Activated CD4-positive, alpha-beta T cell treated with anti-CD3 and anti-CD28 coated beads, Interleukin-2, amount 10 ng/mL, durations not matched to agents 24 days and 14 days (primary cell): ENCODE measurements at regions of chr10 and their contacts with region 1.

Region 1: DNA sequence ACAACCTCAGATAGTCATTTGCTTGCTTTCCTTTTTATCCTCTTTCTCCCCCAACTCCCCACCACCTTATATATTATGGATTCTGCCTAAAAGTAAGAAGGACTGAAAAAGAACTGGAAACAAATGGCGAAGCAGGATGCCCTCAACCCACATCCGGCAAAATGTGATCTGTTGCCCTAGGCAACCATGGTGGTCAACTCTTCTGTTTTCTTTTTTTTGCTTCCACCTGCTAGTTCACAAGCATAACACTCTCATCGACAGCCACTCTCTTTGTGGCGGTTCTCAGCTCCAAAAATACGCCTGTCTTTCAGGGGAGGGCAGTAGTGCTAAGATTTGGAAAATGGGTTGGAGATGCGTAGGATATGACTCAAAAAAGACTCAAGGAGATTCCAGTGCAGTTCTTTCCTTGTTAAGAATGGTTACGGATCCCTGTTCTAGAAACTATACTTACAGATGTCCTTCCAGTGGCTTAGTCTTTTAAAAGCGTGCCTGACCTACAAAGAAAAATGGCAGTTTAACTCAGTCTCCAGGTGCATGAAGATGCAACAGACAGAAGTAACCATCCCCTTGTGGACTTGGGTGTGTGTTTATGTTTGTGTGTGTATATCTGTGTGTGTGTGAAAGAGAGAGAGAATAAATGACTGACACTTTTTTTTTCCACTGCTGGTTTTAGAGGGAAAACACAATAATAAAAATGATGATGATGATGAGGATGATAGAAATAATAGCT is 10.7 kb downstream of the APBB1IP start:
- DNase-seq: peak; percentile 95
- H3K4me3 Mint-ChIP-seq: peak overlapping the region; percentile 80
- H3K27ac Mint-ChIP-seq: peak overlapping the region; percentile 97
- H3K4me1 Mint-ChIP-seq: peaks cover 73% of the 10 kb centered on the region
- H3K27me3 Mint-ChIP-seq: no peaks in the 10 kb centered on the region

Region 2: DNA sequence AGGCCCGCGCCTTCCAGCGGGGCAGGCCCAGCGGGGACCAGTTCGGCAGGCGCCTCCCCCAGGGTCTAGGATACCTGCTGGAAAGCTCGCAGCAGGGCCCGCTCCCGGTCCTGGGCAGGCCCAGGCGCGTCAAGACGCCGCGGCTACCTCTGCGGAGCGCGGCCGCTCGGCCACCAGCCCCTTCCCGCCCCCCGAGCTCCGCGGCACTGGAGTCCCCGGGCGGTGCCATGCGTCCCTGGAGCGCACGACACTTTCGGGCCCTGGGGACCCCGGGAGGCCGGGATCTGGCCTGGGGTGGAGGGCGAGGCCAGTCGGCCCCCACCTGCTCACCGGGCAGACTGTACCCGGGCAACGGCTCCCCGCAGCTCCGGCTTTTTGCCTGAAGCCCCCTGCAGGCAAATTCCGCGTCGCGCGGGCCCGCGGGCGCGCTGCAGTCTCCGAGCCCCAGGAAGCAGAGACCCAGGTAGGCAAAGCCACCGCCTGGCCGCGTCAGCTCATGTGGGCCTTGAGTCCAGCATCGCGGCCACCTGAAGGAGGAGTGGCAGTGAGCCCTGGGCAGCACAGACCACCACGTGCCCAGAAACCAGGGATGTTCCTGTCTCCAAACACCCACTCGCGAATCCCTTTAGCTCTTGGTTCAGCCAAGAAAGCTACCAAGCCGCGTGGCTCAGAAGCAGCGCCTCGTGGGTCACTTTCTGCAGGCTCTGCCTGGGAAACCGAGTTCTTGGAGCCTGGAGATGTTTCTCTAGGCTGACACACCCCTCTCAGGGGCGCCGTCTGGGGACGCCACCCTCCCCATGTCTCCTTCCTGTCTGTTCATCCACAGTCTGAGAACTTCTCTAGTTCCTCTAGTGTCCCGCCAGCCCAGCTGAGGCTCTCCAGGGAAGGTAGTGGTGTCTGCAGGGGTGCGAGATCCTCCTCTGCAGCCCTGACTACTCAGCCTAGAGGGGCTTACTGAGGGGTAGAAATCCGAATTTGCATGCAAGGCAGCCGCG is 56.9 kb before region 1 on chr10:
- intact Hi-C with region 1: no loop called
- DNase-seq: no peak
- H3K4me3 Mint-ChIP-seq: no peak overlapping the region
- H3K27ac Mint-ChIP-seq: no peak overlapping the region
- H3K4me1 Mint-ChIP-seq: no peaks in the 10 kb centered on the region
- H3K27me3 Mint-ChIP-seq: peaks cover 21% of the 10 kb centered on the region

Region 3: GRCh38 chr10:26437637-26438461 is 11.0 kb before region 1 on chr10 and contains the start of gene APBB1IP:
- intact Hi-C with region 1: loop called (anchors 1 kb)
- DNase-seq: peak; percentile 87
- H3K4me3 Mint-ChIP-seq: peak within 1 kb of the TSS; percentile 92
- H3K27ac Mint-ChIP-seq: peak within 1 kb of the TSS; percentile 95
- H3K4me1 Mint-ChIP-seq: peaks cover 37% of the 10 kb centered on the region
- H3K27me3 Mint-ChIP-seq: no peaks in the 10 kb centered on the region
- total RNA-seq, gene APBB1IP: 40.0 and 41.3 TPM in 2 replicates

Region 4: GRCh38 chr10:26475386-26475785 is 26.5 kb after region 1 on chr10:
- intact Hi-C with region 1: loop called (anchors 1 kb)
- DNase-seq: peak; percentile 74
- H3K4me3 Mint-ChIP-seq: peak overlapping the region; percentile 65
- H3K27ac Mint-ChIP-seq: peak overlapping the region; percentile 84
- H3K4me1 Mint-ChIP-seq: peaks cover 69% of the 10 kb centered on the region
- H3K27me3 Mint-ChIP-seq: no peaks in the 10 kb centered on the region

Region 5: DNA sequence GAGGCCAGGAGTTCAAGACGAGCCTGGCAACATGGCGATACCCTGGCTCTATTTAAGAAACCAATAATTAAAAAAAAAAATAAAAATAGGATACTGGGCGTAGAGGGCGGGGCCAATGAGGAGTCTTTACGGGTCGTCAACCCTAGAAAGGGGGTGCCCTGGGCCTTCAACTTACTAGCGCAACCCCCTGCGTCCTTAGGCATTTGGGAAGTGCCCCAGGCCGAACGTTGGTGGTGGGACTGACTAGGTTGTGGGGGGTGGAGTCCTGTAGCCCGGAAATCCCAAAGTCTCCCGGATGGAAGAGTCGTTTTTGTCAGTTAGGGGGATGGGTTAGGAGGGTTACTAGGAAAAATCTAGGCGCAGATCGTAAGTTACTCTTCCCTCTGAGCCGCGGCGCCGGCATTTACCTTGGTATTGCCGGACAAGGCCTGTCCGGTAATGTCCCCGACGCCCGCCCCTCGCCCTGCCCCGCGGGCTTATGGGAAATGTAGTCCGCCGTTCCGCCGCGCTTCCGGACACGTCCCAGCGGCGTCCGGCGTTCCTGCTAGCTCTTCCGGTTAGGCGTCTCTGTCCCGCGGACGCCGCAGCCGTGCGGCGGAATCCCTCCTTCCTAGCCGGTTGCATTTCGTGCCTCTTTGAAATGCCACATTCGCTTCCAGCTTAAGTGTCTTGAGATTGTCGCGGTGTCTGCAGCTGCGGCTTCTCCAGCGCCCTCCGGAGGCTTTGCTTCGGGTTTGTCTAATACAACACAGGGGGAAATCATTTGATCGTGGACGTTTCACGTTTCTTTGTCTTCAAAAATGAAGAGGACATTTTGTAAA is 793.0 kb after region 1 on chr10:
- intact Hi-C with region 1: loop called (anchors 5 kb)
- DNase-seq: peak; percentile 97
- H3K4me3 Mint-ChIP-seq: peak overlapping the region; percentile 96
- H3K27ac Mint-ChIP-seq: peak overlapping the region; percentile 99
- H3K4me1 Mint-ChIP-seq: peaks cover 31% of the 10 kb centered on the region
- H3K27me3 Mint-ChIP-seq: no peaks in the 10 kb centered on the region